ENCODE measurements at regions of chr15 and their contacts with region 1.

Region 1: GRCh38 chr15:69400850-69401249 is 13.3 kb upstream of the KIF23 start:
- DNase-seq: no peak
- ATAC-seq: no peak
- H3K4me3 ChIP-seq: no peak overlapping the region
- H3K4me3 Mint-ChIP-seq: no peak overlapping the region
- H3K27ac ChIP-seq: no peak overlapping the region
- H3K27ac Mint-ChIP-seq: no peak overlapping the region
- H3K4me1 ChIP-seq: peaks cover 3% of the 10 kb centered on the region
- H3K4me1 Mint-ChIP-seq: no peaks in the 10 kb centered on the region
- H3K27me3 ChIP-seq: no peaks in the 10 kb centered on the region
- H3K27me3 Mint-ChIP-seq: no peaks in the 10 kb centered on the region
- CTCF ChIP-seq: no peak

Region 2: GRCh38 chr15:69388260-69388705 is 12.6 kb before region 1 on chr15:
- CTCF ChIA-PET with region 1: no interaction called
- POLR2A ChIA-PET with region 1: no interaction called
- intact Hi-C with region 1: loop called in 1 of 2 experiments (anchors 1 kb)
- DNase-seq: no peak
- ATAC-seq: no peak
- H3K4me3 ChIP-seq: no peak overlapping the region
- H3K4me3 Mint-ChIP-seq: no peak overlapping the region
- H3K27ac ChIP-seq: no peak overlapping the region
- H3K27ac Mint-ChIP-seq: no peak overlapping the region
- H3K4me1 ChIP-seq: no peaks in the 10 kb centered on the region
- H3K4me1 Mint-ChIP-seq: no peaks in the 10 kb centered on the region
- H3K27me3 ChIP-seq: no peaks in the 10 kb centered on the region
- H3K27me3 Mint-ChIP-seq: no peaks in the 10 kb centered on the region
- CTCF ChIP-seq: no peak

Measured in CD4-positive, alpha-beta T cell (primary cell).